ENCODE measurements at regions of chr12 and their contacts with region 1.

Region 1: GRCh38 chr12:65169320-65170208 is at the start of gene LEMD3:
- DNase-seq: peak; percentile 87
- ATAC-seq: peak; percentile 93
- H3K4me3 Mint-ChIP-seq: peak within 1 kb of the TSS; percentile 100
- H3K27ac Mint-ChIP-seq: peak within 1 kb of the TSS; percentile 99
- H3K4me1 Mint-ChIP-seq: peaks cover 43% of the 10 kb centered on the region
- H3K27me3 Mint-ChIP-seq: no peaks in the 10 kb centered on the region
- CTCF ChIP-seq: no peak
- total RNA-seq, gene LEMD3: 38.2 and 45.5 TPM in 2 replicates

Region 2: DNA sequence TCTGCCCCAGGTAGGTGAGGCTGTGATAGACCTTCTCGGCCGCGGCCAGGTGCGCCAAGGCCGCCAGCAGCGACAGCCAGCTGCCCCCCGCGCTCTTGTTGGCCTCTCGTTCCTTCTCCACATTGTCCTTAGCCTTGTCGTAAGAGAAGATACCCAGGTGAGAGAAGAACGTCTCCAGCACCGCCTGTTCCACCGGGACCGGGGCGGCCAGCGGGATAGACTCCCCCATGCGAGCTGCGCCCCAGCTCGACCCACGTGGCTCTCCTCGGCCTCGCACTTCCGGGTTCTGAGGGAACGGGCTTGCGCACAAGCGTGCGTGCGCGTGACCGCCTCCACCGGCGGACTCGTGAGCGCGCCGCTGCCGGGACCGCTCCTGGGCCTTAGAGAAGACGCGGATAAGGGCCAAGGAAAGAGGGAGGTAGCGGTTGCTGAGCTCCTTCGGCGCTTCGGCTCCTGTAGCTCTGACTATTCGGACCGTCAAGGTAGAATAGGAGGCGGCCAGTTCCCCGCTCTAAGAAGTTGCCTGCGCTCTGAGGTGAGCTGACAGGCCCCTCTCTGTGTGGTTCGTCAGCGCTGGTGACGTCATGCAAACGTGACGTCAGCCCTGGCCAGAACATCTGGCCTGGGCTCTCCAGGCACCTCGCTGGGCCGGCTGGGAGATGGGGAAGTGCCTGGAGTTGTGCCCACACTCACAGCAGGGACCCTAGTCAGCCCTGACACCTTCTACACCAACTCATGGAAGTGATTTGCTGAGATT is 947.4 kb before region 1 on chr12 and contains the start of gene KICS2:
- CTCF ChIA-PET with region 1: no interaction called
- POLR2A ChIA-PET with region 1: interaction called, 4 read pairs
- intact Hi-C with region 1: loop called (anchors 1 kb)
- DNase-seq: peak; percentile 90
- ATAC-seq: peak; percentile 86
- H3K4me3 Mint-ChIP-seq: peak within 1 kb of the TSS; percentile 96
- H3K27ac Mint-ChIP-seq: peak within 1 kb of the TSS; percentile 97
- H3K4me1 Mint-ChIP-seq: peaks cover 27% of the 10 kb centered on the region
- H3K27me3 Mint-ChIP-seq: no peaks in the 10 kb centered on the region
- CTCF ChIP-seq: no peak
- total RNA-seq, gene KICS2: 16.5 and 16.8 TPM in 2 replicates

Region 3: GRCh38 chr12:65121049-65121955 is 48.3 kb before region 1 on chr12 and contains the start of gene WIF1:
- CTCF ChIA-PET with region 1: no interaction called
- POLR2A ChIA-PET with region 1: no interaction called
- intact Hi-C with region 1: loop called (anchors 1 kb)
- DNase-seq: peak; percentile 32
- ATAC-seq: peak; percentile 47
- H3K4me3 Mint-ChIP-seq: peak within 1 kb of the TSS; percentile 55
- H3K27ac Mint-ChIP-seq: no peak within 1 kb of the TSS
- H3K4me1 Mint-ChIP-seq: peaks cover 14% of the 10 kb centered on the region
- H3K27me3 Mint-ChIP-seq: peaks cover 30% of the 10 kb centered on the region
- CTCF ChIP-seq: no peak
- total RNA-seq, gene WIF1: not detected in 2 replicates

Region 4: GRCh38 chr12:65188179-65188701 is 18.7 kb after region 1 on chr12:
- CTCF ChIA-PET with region 1: interaction called, 3 read pairs
- POLR2A ChIA-PET with region 1: interaction called, 14 read pairs
- intact Hi-C with region 1: loop called (anchors 1 kb)
- DNase-seq: no peak
- ATAC-seq: no peak
- H3K4me3 Mint-ChIP-seq: peak overlapping the region; percentile 9
- H3K27ac Mint-ChIP-seq: peak overlapping the region; percentile 57
- H3K4me1 Mint-ChIP-seq: peaks cover 83% of the 10 kb centered on the region
- H3K27me3 Mint-ChIP-seq: no peaks in the 10 kb centered on the region
- CTCF ChIP-seq: no peak

Region 5: DNA sequence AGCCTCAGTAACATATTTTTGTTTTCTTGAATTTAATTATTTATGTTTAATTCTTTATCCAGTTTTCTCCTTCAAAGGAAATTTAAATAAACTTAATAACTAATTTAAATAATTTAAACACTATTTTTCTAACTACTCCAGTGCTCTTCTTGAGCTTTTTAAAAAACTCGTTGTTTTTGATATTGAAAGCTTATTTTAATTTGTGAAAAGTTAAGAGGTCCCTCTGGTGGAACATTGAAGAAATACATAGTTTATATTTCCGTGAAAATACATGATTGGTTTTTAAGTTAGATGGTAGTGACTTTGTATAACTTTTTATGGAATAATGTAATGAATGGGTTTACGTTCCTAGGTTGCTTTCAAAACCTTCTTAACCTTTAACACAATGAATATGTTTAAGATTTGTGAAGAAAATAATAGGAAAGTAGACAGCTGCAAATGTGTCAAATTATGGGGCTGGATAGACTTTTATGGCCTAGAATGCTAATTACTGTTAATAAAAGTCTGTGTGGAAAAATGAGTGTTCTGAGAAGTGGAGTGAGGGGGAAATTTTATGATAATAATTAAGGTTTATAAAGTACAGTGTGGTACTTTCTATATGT is 63.0 kb after region 1 on chr12:
- CTCF ChIA-PET with region 1: interaction called, 17 read pairs
- POLR2A ChIA-PET with region 1: interaction called, 12 read pairs
- intact Hi-C with region 1: loop called (anchors 1 kb)
- DNase-seq: no peak
- ATAC-seq: peak; percentile 37
- H3K4me3 Mint-ChIP-seq: no peak overlapping the region
- H3K27ac Mint-ChIP-seq: peak overlapping the region; percentile 64
- H3K4me1 Mint-ChIP-seq: peaks cover 9% of the 10 kb centered on the region
- H3K27me3 Mint-ChIP-seq: no peaks in the 10 kb centered on the region
- CTCF ChIP-seq: no peak

Region 6: GRCh38 chr12:66301944-66302826 is 1132.6 kb after region 1 on chr12 and contains the start of gene HELB:
- CTCF ChIA-PET with region 1: no interaction called
- POLR2A ChIA-PET with region 1: interaction called, 5 read pairs
- intact Hi-C with region 1: loop called (anchors 1 kb)
- DNase-seq: peak; percentile 80
- ATAC-seq: peak; percentile 95
- H3K4me3 Mint-ChIP-seq: peak within 1 kb of the TSS; percentile 99
- H3K27ac Mint-ChIP-seq: peak within 1 kb of the TSS; percentile 86
- H3K4me1 Mint-ChIP-seq: peaks cover 41% of the 10 kb centered on the region
- H3K27me3 Mint-ChIP-seq: peaks cover 1% of the 10 kb centered on the region
- CTCF ChIP-seq: no peak
- total RNA-seq, gene HELB: 4.7 and 7.2 TPM in 2 replicates